G401 (cell line): ENCODE measurements at regions of chr3 and their contacts with region 1.

Region 1: GRCh38 chr3:49081429-49081828 is 12.4 kb downstream of the QRICH1 start:
- DNase-seq: no peak

Region 2: DNA sequence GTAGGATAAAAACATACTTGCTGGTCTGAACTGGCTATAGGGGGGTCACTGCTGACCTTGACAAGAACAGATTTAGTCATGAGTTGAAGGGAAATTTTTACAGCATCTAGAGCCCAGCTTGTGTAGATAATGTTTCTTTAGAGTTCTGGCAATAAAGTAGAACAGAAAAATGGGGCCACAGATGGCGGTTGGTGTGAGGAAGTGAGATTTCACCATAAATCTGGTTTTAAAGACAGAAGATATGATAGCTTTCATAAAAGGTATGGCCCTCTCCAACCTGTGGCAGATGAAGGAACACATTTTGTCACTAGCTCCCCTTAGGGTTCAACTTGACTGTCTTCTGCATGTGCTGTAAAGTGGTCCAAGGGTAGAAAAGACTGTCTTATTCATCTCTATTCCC is 27.9 kb before region 1 on chr3:
- in situ Hi-C with region 1: loop called (anchors 5 kb)
- DNase-seq: no peak